ENCODE measurements at regions of chr20 and their contacts with region 1.

Region 1: GRCh38 chr20:5126512-5127203 is at the start of gene CDS2:
- DNase-seq: peak; percentile 100
- H3K4me3 Mint-ChIP-seq: peak within 1 kb of the TSS; percentile 90
- H3K27ac Mint-ChIP-seq: peak within 1 kb of the TSS; percentile 94
- H3K4me1 Mint-ChIP-seq: peaks cover 50% of the 10 kb centered on the region
- H3K27me3 Mint-ChIP-seq: no peaks in the 10 kb centered on the region
- total RNA-seq, gene CDS2: 23.2 to 24.1 TPM

Region 2: GRCh38 chr20:5146871-5147592 is 20.4 kb after region 1 on chr20:
- CTCF ChIA-PET with region 1: interaction called, 10 read pairs
- intact Hi-C with region 1: loop called (anchors 1 kb)
- DNase-seq: no peak
- H3K4me3 Mint-ChIP-seq: no peak overlapping the region
- H3K27ac Mint-ChIP-seq: no peak overlapping the region
- H3K4me1 Mint-ChIP-seq: peaks cover 54% of the 10 kb centered on the region
- H3K27me3 Mint-ChIP-seq: no peaks in the 10 kb centered on the region

Region 3: DNA sequence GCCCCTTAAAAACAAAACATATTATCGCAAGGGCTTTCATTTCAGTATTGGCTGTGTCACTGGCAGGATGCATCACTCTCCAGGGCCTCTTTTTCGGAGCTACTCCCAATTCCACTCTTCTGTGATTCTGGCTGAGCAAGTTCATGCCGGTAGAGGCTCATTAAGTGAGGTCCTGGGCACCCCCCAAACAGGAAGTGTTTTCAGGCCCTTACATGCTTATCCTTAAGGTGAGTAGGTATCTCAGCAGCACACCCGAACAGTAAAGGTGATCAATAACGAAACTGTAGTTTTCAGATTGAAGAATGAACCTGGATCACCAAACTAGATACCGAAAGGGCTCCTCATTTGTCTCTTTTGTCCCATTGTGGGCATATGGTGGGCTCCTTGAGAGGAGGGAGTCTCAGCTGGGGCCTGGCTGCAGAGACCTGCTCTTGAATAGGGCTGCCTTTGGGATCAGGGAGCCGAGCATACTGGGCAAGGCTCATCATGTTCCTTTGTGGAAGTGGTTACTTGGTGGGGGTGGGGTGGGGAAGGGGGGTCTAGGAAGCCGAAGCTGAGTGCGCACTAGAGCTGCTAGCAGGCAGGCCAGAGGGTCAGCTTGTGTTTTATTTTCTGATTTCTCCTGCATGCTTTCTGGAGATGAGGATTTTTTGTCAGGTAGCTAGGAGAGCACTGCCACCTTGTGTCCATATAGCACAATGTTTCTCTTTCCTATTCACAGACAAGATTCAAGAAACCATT is 65.3 kb after region 1 on chr20:
- CTCF ChIA-PET with region 1: interaction called, 180 read pairs
- intact Hi-C with region 1: loop called (anchors 1 kb)
- DNase-seq: peak; percentile 67
- H3K4me3 Mint-ChIP-seq: no peak overlapping the region
- H3K27ac Mint-ChIP-seq: peak overlapping the region; percentile 78
- H3K4me1 Mint-ChIP-seq: peaks cover 19% of the 10 kb centered on the region
- H3K27me3 Mint-ChIP-seq: no peaks in the 10 kb centered on the region

Region 4: GRCh38 chr20:5353624-5354496 is 227.2 kb after region 1 on chr20:
- CTCF ChIA-PET with region 1: no interaction called
- intact Hi-C with region 1: loop called (anchors 10 kb)
- DNase-seq: no peak
- H3K4me3 Mint-ChIP-seq: no peak overlapping the region
- H3K27ac Mint-ChIP-seq: peak overlapping the region; percentile 27
- H3K4me1 Mint-ChIP-seq: peaks cover 16% of the 10 kb centered on the region
- H3K27me3 Mint-ChIP-seq: peaks cover 14% of the 10 kb centered on the region

Region 5: GRCh38 chr20:5592823-5593739 is 466.4 kb after region 1 on chr20:
- CTCF ChIA-PET with region 1: no interaction called
- intact Hi-C with region 1: loop called (anchors 5 kb)
- DNase-seq: no peak
- H3K4me3 Mint-ChIP-seq: peak overlapping the region; percentile 69
- H3K27ac Mint-ChIP-seq: peak overlapping the region; percentile 95
- H3K4me1 Mint-ChIP-seq: peaks cover 78% of the 10 kb centered on the region
- H3K27me3 Mint-ChIP-seq: no peaks in the 10 kb centered on the region

Region 6: GRCh38 chr20:5749952-5750779 is 623.5 kb after region 1 on chr20 and contains the start of gene SHLD1:
- CTCF ChIA-PET with region 1: no interaction called
- intact Hi-C with region 1: loop called (anchors 5 kb)
- DNase-seq: peak; percentile 89
- H3K4me3 Mint-ChIP-seq: peak within 1 kb of the TSS; percentile 93
- H3K27ac Mint-ChIP-seq: peak within 1 kb of the TSS; percentile 97
- H3K4me1 Mint-ChIP-seq: peaks cover 17% of the 10 kb centered on the region
- H3K27me3 Mint-ChIP-seq: no peaks in the 10 kb centered on the region
- total RNA-seq, gene SHLD1: 10.1 TPM

Region 7: DNA sequence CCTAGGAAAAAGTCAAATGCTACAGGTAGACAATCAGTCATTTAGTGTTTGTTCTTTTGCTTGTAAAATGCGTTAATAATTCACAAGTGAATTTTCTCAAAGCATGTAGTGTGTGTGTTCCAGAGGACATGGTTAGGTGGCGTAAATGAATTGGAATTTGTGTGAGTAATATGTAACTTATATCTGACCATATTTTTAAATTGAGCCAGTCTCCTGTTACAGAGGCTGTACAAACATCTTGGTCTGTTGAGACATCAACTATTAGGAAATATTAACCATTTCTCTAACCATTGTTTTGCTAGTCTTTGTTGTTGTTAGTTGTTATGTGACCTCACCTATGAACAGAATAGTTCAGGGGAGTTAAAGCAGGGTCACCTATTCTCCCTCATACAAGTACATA is 846.5 kb after region 1 on chr20:
- CTCF ChIA-PET with region 1: no interaction called
- intact Hi-C with region 1: no loop called
- DNase-seq: no peak
- H3K4me3 Mint-ChIP-seq: no peak overlapping the region
- H3K27ac Mint-ChIP-seq: no peak overlapping the region
- H3K4me1 Mint-ChIP-seq: no peaks in the 10 kb centered on the region
- H3K27me3 Mint-ChIP-seq: no peaks in the 10 kb centered on the region